RWPE1 (cell line): ENCODE measurements at regions of chr1 and their contacts with region 1.

Region 1: GRCh38 chr1:35769188-35769758 is 505 bp downstream of the CLSPN start:
- DNase-seq: peak; percentile 92
- H3K27ac ChIP-seq: peak overlapping the region; percentile 91
- CTCF ChIP-seq: no peak

Region 2: GRCh38 chr1:33878392-33878791 is 1890.9 kb before region 1 on chr1:
- CTCF ChIA-PET with region 1: no interaction called
- POLR2A ChIA-PET with region 1: interaction called, 14 read pairs
- DNase-seq: no peak
- H3K27ac ChIP-seq: no peak overlapping the region
- CTCF ChIP-seq: no peak